CD14-positive monocyte (primary cell): ENCODE measurements at regions of chr1 and their contacts with region 1.

Region 1: DNA sequence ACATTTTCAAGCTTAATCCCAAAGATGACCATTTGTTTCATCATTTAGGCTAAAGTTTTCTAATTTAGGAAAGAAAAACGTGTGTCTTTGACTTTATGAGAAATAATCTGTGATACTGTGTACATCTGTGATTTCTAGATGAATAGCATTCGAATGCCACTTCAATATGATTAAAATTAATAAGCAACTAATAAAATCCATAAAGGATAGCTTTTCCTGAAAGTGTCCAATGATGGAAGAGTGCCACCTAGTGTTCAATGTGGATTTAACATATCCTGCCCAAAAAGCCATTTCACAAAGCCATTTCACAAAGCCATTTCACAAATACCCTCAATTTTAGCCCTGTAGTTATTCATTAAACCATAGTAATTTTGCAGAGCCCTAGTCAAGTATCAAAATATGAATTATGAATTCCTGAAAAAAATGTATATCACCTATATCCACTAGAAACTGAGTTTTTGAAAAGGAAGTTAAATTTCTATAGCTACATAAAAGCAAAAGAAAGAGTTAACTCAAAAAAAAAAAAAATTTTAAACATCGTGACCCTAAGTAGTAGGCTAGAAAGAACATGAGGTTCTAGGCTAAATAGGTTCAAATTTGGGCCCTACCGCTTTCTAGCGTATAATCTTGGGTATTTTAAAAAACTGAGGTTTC is 19.1 kb downstream of the NME7 start:
- DNase-seq: peak; percentile 50 to 60 (median 56)
- H3K4me3 ChIP-seq: no peak overlapping the region
- H3K4me3 Mint-ChIP-seq: no peak overlapping the region
- H3K27ac ChIP-seq: no peak overlapping the region
- H3K27ac Mint-ChIP-seq: no peak overlapping the region
- H3K4me1 ChIP-seq: no peaks in the 10 kb centered on the region
- H3K4me1 Mint-ChIP-seq: peaks cover 2% of the 10 kb centered on the region
- H3K27me3 ChIP-seq: no peaks in the 10 kb centered on the region
- H3K27me3 Mint-ChIP-seq: no peaks in the 10 kb centered on the region
- CTCF ChIP-seq: peak; percentile 83

Region 2: DNA sequence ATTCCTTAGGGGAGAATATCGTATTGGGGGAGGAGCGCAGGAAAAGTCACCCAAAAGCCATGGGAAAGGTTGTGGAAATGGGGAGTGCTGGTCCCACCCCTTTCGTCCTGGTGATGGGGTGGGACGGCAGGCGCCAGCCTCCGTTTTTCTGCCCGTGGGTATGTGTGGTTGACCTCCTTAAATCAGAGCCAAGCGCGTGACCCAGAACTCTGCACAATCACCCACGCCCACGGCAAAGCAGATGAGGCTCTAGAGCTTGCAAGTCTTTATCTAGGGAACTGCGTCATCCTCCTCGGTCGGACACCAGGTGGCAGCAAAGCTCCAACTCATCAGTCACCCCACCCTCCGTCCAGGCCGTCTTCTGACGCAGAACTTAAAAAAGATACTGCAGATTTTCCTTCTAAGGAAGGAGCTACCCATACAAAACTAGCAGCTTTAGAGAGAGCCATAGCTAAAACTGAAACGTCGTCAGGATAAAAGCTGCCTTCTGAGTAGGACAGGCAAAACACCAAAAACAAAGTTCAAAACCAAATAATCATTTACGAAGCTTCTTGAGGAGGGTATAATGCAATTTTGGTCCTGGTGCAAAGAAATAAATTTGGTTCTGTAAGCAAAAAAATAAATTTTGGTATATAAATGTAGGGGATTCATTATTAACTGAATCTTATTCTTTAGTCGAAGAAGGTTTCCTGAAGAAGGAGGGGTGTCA is 1005.8 kb before region 1 on chr1:
- intact Hi-C with region 1: loop called (anchors 2 to 5 kb)
- DNase-seq: peak; percentile 80 to 81 (median 81)
- H3K4me3 ChIP-seq: peak overlapping the region in 1 of 3 experiments; percentile 44
- H3K4me3 Mint-ChIP-seq: peak overlapping the region; percentile 27 to 71
- H3K27ac ChIP-seq: no peak overlapping the region
- H3K27ac Mint-ChIP-seq: peak overlapping the region in 1 of 7 donors; percentile 11
- H3K4me1 ChIP-seq: peaks cover 7 to 8% of the 10 kb centered on the region in 2 donors
- H3K4me1 Mint-ChIP-seq: peaks cover 17% of the 10 kb centered on the region
- H3K27me3 ChIP-seq: no peaks in the 10 kb centered on the region
- H3K27me3 Mint-ChIP-seq: peaks cover 0 to 4% (median 3%) of the 10 kb centered on the region in 3 donors
- CTCF ChIP-seq: peak; percentile 79

Region 3: GRCh38 chr1:168439456-168440375 is 908.8 kb before region 1 on chr1:
- intact Hi-C with region 1: loop called (anchors 5 to 10 kb)
- DNase-seq: peak; percentile 52 to 71 (median 67)
- H3K4me3 ChIP-seq: peak overlapping the region in 1 of 3 experiments; percentile 58
- H3K4me3 Mint-ChIP-seq: peak overlapping the region; percentile 75 to 88
- H3K27ac ChIP-seq: no peak overlapping the region
- H3K27ac Mint-ChIP-seq: no peak overlapping the region
- H3K4me1 ChIP-seq: peaks cover 8 to 9% of the 10 kb centered on the region in 2 donors
- H3K4me1 Mint-ChIP-seq: peaks cover 14% of the 10 kb centered on the region
- H3K27me3 ChIP-seq: no peaks in the 10 kb centered on the region
- H3K27me3 Mint-ChIP-seq: peaks cover 0 to 4% (median 3%) of the 10 kb centered on the region in 3 donors
- CTCF ChIP-seq: peak; percentile 87

Region 4: DNA sequence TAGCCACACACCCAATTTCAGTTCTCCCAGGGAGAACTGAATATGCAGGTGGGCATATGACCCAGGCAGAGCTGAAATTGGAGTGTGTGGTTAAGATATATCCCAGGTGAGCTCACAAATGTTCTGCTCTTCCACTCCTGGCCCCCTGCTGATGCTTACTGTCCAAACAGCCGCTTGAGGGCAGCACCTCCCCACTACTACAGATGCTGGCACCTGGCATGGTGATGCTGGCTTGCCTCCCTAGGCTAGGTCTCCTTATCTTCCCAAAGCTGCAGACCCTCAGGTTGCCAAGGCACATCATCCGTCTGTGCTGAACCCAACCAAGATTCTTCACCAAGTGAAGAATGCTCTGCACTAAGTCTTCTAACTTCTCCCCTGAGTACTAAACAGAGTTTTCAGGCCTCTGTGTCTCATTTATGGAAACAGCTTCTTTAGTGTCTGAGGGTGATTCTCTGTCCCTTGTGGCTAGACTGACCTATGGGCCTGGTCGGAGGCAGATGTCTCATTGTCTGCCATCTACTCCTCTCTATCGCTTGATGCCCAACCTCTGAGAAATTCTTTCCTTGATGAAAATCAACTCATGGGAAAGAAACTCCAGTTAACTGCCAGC is 744.9 kb before region 1 on chr1:
- intact Hi-C with region 1: loop called (anchors 5 kb)
- DNase-seq: peak; percentile 18 to 48 (median 29)
- H3K4me3 ChIP-seq: no peak overlapping the region
- H3K4me3 Mint-ChIP-seq: no peak overlapping the region
- H3K27ac ChIP-seq: no peak overlapping the region
- H3K27ac Mint-ChIP-seq: peak overlapping the region in 1 of 7 donors; percentile 77
- H3K4me1 ChIP-seq: no peaks in the 10 kb centered on the region
- H3K4me1 Mint-ChIP-seq: no peaks in the 10 kb centered on the region
- H3K27me3 ChIP-seq: no peaks in the 10 kb centered on the region
- H3K27me3 Mint-ChIP-seq: peaks cover 0 to 2% (median 0%) of the 10 kb centered on the region in 3 donors
- CTCF ChIP-seq: peak; percentile 66